Right ventricle myocardium superior (tissue), 1 donor: ENCODE measurements at regions of chr7 and their contacts with region 1.

Region 1: GRCh38 chr7:6272481-6273323 is at the start of gene CYTH3:
- DNase-seq: peak; percentile 88
- ATAC-seq: peak; percentile 95
- total RNA-seq, gene CYTH3: 25.6 TPM

Region 2: DNA sequence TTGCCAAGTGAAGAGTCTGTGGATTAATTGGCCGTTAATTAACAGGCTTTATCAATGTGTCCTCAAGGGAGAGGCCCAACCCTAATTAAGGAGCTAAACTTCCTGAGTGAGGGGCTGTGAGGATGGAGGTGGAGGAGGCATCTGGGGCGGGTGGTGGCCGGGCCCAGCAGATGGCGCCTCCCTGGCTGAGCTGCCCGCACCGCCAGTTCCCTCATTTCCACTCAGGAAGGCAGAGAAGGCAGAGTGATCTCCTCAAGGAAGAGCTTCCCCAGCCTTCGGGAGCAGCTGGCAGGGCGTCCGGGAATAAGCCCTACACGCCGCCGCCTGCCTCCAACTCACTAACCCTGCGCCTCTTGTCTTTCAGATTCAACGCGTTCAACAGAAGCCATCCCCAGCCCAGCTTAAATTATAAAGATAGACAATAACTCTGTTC is 112.5 kb before region 1 on chr7:
- intact Hi-C with region 1: loop called (anchors 5 kb)
- DNase-seq: peak; percentile 80
- ATAC-seq: peak; percentile 77

Region 3: GRCh38 chr7:6310271-6310971 is 37.7 kb after region 1 on chr7:
- intact Hi-C with region 1: loop called (anchors 5 kb)
- DNase-seq: peak; percentile 6
- ATAC-seq: no peak